ENCODE measurements at regions of chr1 and their contacts with region 1.

Region 1: DNA sequence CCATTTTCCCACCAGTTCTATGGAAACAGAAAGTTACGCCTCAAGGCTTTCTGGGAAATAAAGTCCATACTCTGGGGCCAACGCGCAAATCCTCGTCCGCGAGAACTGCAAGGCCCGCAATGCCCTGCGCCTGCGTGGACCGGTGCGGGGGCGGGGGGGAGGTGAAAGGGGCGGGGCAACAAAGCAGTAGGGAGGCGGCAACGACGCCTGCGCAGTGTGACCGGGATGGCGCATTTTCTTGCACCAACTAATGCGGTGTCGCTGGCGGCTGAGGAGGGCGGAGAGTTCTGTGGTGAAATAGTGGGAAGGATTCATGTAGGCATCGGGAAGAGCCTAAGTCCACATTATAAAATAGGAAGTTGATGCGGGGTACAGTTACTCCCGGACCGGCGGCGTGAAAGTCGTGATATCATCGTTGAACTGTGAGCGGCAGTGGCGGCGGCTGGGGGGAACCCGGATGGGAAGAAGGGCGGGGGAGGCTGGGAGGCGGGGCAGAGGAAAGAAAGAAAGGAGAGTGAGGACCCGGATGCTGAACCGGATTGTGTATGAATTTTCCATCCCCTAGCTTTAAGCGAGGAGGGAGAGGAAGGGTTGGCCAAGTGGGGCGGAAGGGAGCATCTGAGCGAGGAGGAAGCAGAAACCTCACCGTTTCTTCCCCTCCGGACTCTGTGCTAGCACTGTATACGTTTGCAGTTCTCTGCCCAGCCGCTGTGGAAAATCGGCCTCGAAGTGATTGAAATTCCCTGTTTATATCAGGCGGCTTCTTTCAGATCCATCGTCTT is at the start of gene GGPS1:
- DNase-seq: peak; percentile 90
- ATAC-seq: peak; percentile 75
- H3K4me3 Mint-ChIP-seq: no peak within 1 kb of the TSS
- H3K27ac Mint-ChIP-seq: no peak within 1 kb of the TSS
- H3K4me1 Mint-ChIP-seq: peaks cover 27% of the 10 kb centered on the region
- H3K27me3 Mint-ChIP-seq: no peaks in the 10 kb centered on the region
- CTCF ChIP-seq: no peak
- total RNA-seq, gene GGPS1: 25.4 and 33.8 TPM in 2 replicates

Region 2: GRCh38 chr1:234373064-234373958 is 955.2 kb before region 1 on chr1 and contains the start of gene COA6:
- CTCF ChIA-PET with region 1: no interaction called
- POLR2A ChIA-PET with region 1: interaction called, 4 read pairs
- intact Hi-C with region 1: loop called (anchors 1 kb)
- DNase-seq: peak; percentile 88
- ATAC-seq: peak; percentile 86
- H3K4me3 Mint-ChIP-seq: peak within 1 kb of the TSS; percentile 99
- H3K27ac Mint-ChIP-seq: peak within 1 kb of the TSS; percentile 99
- H3K4me1 Mint-ChIP-seq: peaks cover 30% of the 10 kb centered on the region
- H3K27me3 Mint-ChIP-seq: no peaks in the 10 kb centered on the region
- CTCF ChIP-seq: no peak
- total RNA-seq, gene COA6: 20.7 and 24.0 TPM in 2 replicates

Region 3: GRCh38 chr1:235128456-235129328 is 199.9 kb before region 1 on chr1 and contains the start of gene TOMM20:
- CTCF ChIA-PET with region 1: no interaction called
- POLR2A ChIA-PET with region 1: no interaction called
- intact Hi-C with region 1: loop called (anchors 1 kb)
- DNase-seq: peak; percentile 91
- ATAC-seq: peak; percentile 93
- H3K4me3 Mint-ChIP-seq: peak within 1 kb of the TSS; percentile 97
- H3K27ac Mint-ChIP-seq: peak within 1 kb of the TSS; percentile 93
- H3K4me1 Mint-ChIP-seq: peaks cover 41% of the 10 kb centered on the region
- H3K27me3 Mint-ChIP-seq: no peaks in the 10 kb centered on the region
- CTCF ChIP-seq: no peak
- total RNA-seq, gene TOMM20: 80.6 and 82.7 TPM in 2 replicates

Region 4: DNA sequence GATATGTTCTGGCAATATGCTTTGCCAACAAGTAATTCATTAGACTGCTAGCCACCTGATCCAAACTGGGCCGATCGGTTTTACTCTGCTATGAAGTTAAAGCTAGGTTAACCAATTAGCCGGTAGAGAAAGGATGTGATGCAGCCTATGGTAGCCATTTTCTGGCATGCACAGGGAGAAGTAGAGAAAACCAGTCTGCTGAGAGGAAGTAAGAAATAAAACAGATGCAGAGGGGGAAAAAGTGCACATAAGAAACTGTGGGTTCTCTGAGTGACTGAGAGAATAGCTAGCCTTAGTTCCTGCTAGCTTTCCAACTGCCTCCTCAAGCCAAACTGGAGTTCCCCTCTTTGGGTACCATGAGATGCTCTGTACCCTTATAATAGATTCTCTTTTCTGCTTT is 53.3 kb before region 1 on chr1:
- CTCF ChIA-PET with region 1: interaction called, 3 read pairs
- POLR2A ChIA-PET with region 1: interaction called, 22 read pairs
- intact Hi-C with region 1: no loop called
- DNase-seq: no peak
- ATAC-seq: peak; percentile 86
- H3K4me3 Mint-ChIP-seq: peak overlapping the region; percentile 21
- H3K27ac Mint-ChIP-seq: peak overlapping the region; percentile 76
- H3K4me1 Mint-ChIP-seq: peaks cover 75% of the 10 kb centered on the region
- H3K27me3 Mint-ChIP-seq: no peaks in the 10 kb centered on the region
- CTCF ChIP-seq: no peak

Region 5: GRCh38 chr1:235367000-235367908 is 38.7 kb after region 1 on chr1 and contains the start of gene TBCE:
- CTCF ChIA-PET with region 1: no interaction called
- POLR2A ChIA-PET with region 1: interaction called, 8 read pairs
- intact Hi-C with region 1: loop called (anchors 1 kb)
- DNase-seq: peak; percentile 80
- ATAC-seq: peak; percentile 100
- H3K4me3 Mint-ChIP-seq: peak within 1 kb of the TSS; percentile 97
- H3K27ac Mint-ChIP-seq: peak within 1 kb of the TSS; percentile 89
- H3K4me1 Mint-ChIP-seq: peaks cover 29% of the 10 kb centered on the region
- H3K27me3 Mint-ChIP-seq: no peaks in the 10 kb centered on the region
- CTCF ChIP-seq: no peak
- total RNA-seq, gene TBCE: 13.9 and 19.1 TPM in 2 replicates

Region 6: DNA sequence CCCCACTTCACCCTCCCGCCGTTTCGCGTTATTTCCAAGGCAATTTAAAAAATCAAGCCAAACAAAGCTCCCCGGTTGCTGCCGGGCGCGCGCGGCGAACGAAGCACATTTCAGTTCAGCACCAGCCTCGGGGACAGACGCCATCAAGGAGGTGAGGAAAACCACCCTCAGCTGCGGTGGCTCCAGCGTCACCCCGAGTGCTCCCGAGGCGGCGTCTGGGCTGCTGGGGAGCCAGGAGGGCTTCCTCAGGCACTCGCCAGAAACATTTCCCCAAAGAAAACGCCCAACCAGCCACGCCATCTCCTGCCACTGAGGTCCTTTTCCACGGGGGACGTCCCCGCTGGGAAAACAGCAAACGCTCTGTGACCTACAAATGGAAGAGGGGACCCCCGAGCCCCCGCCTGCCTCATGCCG is 320.4 kb after region 1 on chr1:
- CTCF ChIA-PET with region 1: no interaction called
- POLR2A ChIA-PET with region 1: no interaction called
- intact Hi-C with region 1: no loop called
- DNase-seq: peak; percentile 40
- ATAC-seq: peak; percentile 65
- H3K4me3 Mint-ChIP-seq: peak overlapping the region; percentile 88
- H3K27ac Mint-ChIP-seq: no peak overlapping the region
- H3K4me1 Mint-ChIP-seq: peaks cover 15% of the 10 kb centered on the region
- H3K27me3 Mint-ChIP-seq: peaks cover 62% of the 10 kb centered on the region
- CTCF ChIP-seq: no peak

Region 7: GRCh38 chr1:236523701-236524141 is 1195.2 kb after region 1 on chr1 and contains the start of gene LGALS8:
- CTCF ChIA-PET with region 1: no interaction called
- POLR2A ChIA-PET with region 1: no interaction called
- intact Hi-C with region 1: loop called (anchors 5 kb)
- DNase-seq: peak; percentile 69
- ATAC-seq: peak; percentile 60
- H3K4me3 Mint-ChIP-seq: peak within 1 kb of the TSS; percentile 95
- H3K27ac Mint-ChIP-seq: peak within 1 kb of the TSS; percentile 90
- H3K4me1 Mint-ChIP-seq: peaks cover 12% of the 10 kb centered on the region
- H3K27me3 Mint-ChIP-seq: no peaks in the 10 kb centered on the region
- CTCF ChIP-seq: no peak
- total RNA-seq, gene LGALS8: 36.0 and 37.4 TPM in 2 replicates

Measured in activated B cell treated with CpG ODN at 0.5 μM for 24 hours (primary cell).